ENCODE measurements at regions of chr1 and their contacts with region 1.

Region 1: GRCh38 chr1:172024516-172024915 is 183.2 kb downstream of the DNM3 start:
- DNase-seq: no peak
- ATAC-seq: no peak
- H3K4me3 ChIP-seq: no peak overlapping the region
- H3K4me3 Mint-ChIP-seq: no peak overlapping the region
- H3K27ac ChIP-seq: no peak overlapping the region
- H3K27ac Mint-ChIP-seq: no peak overlapping the region
- H3K4me1 ChIP-seq: no peaks in the 10 kb centered on the region
- H3K4me1 Mint-ChIP-seq: no peaks in the 10 kb centered on the region
- H3K27me3 ChIP-seq: no peaks in the 10 kb centered on the region
- H3K27me3 Mint-ChIP-seq: peaks cover 8% of the 10 kb centered on the region
- CTCF ChIP-seq: no peak

Region 2: DNA sequence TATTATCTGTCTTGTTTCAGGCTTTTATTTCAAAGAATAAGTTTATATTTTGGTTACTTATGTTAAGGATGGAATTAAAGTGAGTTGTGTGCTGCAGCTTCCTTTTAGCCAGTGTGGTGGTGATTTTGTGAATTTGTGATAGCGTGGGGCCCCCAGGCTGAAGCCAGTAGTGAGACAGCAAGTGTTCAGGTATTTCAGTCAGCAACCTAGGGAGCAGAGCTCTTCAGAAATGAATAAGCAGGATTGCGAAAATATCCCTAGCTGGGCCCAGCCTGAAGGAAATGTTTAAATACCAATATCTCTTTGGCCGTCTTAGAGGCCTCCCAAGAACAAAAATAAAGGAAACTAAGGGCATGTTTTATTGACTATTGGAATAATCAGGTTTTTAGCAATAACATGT is 245.1 kb after region 1 on chr1:
- CTCF ChIA-PET with region 1: no interaction called
- POLR2A ChIA-PET with region 1: interaction called, 10 read pairs
- intact Hi-C with region 1: no loop called
- DNase-seq: no peak
- ATAC-seq: no peak
- H3K4me3 ChIP-seq: no peak overlapping the region
- H3K4me3 Mint-ChIP-seq: no peak overlapping the region
- H3K27ac ChIP-seq: no peak overlapping the region
- H3K27ac Mint-ChIP-seq: no peak overlapping the region
- H3K4me1 ChIP-seq: no peaks in the 10 kb centered on the region
- H3K4me1 Mint-ChIP-seq: no peaks in the 10 kb centered on the region
- H3K27me3 ChIP-seq: no peaks in the 10 kb centered on the region
- H3K27me3 Mint-ChIP-seq: no peaks in the 10 kb centered on the region
- CTCF ChIP-seq: no peak